Activated CD4-positive, alpha-beta memory T cell treated with anti-CD3 and anti-CD28 coated beads, Interleukin-2, amount 10 ng/mL, durations not matched to agents 7 days and 5 days (primary cell): ENCODE measurements at regions of chr17 and their contacts with region 1.

Region 1: DNA sequence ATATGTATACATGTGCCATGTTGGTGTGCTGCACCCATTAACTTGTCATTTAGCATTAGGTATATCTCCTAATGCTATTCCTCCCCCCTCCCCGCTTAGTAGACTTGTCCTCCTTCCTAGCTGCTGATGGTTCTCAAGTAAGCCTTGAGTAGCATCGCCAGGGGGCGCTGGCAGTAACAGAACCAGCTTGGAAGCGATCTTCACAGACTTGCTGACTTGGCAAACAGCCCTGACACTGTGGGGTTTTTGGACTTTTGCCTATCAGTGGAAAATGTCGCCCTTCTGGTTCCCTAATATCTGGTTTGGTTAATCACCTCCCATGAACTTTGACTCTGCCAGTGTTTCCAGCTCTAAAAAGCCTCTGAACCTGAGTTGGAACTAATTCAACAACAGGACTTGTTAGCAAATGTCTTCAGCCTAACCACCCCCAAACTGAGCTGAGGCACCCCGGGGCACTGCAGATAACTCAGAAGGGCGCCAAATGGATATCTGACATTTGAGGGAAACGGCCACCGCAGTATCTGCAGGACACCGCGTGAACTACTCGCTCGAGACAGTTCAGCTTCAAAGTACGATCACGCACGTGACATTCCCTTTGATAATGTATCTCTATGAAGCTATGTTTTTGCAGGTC is 15.4 kb upstream of the SPATA32 start:
- DNase-seq: peak; percentile 92
- H3K4me3 Mint-ChIP-seq: no peak overlapping the region
- H3K27ac Mint-ChIP-seq: no peak overlapping the region
- H3K4me1 Mint-ChIP-seq: peaks cover 17% of the 10 kb centered on the region
- H3K27me3 Mint-ChIP-seq: no peaks in the 10 kb centered on the region

Region 2: GRCh38 chr17:45261577-45262515 is 15.5 kb before region 1 on chr17 and contains the start of gene SPATA32:
- CTCF ChIA-PET with region 1: interaction called, 11 read pairs
- POLR2A ChIA-PET with region 1: interaction called, 3 read pairs
- DNase-seq: peak; percentile 75
- H3K4me3 Mint-ChIP-seq: peak within 1 kb of the TSS; percentile 70
- H3K27ac Mint-ChIP-seq: peak within 1 kb of the TSS; percentile 61
- H3K4me1 Mint-ChIP-seq: peaks cover 22% of the 10 kb centered on the region
- H3K27me3 Mint-ChIP-seq: no peaks in the 10 kb centered on the region
- total RNA-seq, gene SPATA32: 0.20 to 0.23 TPM

Region 3: DNA sequence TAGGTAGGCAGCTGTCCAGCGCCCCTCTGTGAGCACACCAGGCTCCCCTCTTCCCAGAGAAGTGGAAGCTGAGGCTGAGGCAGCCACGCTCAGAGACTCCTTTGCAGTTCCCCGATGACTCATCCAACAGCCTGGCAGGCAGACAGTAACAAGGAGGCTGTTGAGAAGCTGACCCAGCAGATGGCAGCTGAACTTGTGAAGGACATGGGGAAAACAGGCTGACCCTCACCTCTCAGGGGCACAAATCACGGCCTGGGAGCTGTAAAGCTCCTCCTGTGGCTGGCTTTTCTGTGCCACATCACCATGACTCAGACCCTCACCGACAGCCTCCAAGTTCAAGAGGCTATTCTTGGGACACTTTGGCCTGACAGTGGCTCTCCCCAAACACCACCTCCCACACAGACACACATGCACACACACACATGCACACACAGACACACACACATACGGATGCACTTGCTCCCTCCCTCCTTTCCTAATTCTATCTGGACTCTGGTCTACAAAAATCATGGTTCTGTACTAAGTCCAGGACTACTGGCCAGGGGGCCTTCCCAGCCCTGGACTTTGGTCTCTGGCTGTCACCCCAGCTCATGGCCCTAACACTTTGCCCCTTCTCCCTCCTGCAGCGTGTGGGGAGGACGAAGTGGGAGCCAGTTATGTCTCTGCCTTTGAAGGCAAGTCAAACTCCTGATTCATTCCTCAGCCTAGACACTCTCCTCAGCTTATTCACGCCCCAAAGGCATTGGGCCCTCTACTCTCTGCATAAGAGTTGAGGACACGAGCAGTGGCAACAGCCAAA is 16.3 kb after region 1 on chr17:
- CTCF ChIA-PET with region 1: interaction called, 24 read pairs
- POLR2A ChIA-PET with region 1: interaction called, 6 read pairs
- DNase-seq: no peak
- H3K4me3 Mint-ChIP-seq: no peak overlapping the region
- H3K27ac Mint-ChIP-seq: peak overlapping the region; percentile 63
- H3K4me1 Mint-ChIP-seq: peaks cover 76% of the 10 kb centered on the region
- H3K27me3 Mint-ChIP-seq: no peaks in the 10 kb centered on the region

Region 4: DNA sequence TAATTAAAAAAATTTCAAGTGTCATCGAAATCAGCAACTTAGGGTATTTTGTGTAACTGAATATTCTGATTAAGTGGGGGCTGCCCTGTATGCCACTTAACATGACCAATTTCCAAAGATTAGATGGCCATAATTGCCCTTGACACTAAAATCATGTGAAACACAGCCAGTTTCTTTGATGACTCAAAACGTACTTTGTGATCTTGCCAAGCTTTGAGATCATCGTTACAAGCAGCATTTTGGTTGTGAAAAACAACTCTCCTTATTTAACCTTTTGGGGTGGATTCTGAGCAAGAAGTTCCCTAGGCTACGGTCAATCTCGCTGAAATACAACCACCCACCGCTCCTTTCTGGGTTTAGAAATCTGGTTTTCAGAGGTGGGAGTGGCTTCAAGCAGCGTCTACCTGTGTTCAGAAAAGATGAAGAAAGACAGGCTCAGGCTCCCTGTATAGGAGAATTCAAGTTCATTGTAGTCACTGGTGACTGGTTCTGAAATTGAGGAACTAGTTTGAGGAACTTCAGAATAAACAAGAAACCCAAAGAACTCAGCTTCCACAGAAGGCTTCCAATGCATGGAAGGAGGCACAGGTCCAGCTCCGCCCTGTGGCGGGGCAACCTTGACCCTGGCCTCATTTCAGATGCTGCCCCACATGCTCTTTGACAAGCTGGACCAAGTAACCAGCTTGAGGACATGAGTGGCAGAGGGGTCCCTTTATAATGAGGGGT is 30.1 kb after region 1 on chr17:
- CTCF ChIA-PET with region 1: interaction called, 54 read pairs
- POLR2A ChIA-PET with region 1: interaction called, 16 read pairs
- DNase-seq: peak; percentile 51
- H3K4me3 Mint-ChIP-seq: no peak overlapping the region
- H3K27ac Mint-ChIP-seq: peak overlapping the region; percentile 75
- H3K4me1 Mint-ChIP-seq: peaks cover 86% of the 10 kb centered on the region
- H3K27me3 Mint-ChIP-seq: no peaks in the 10 kb centered on the region

Region 5: GRCh38 chr17:45353043-45353442 is 75.7 kb after region 1 on chr17:
- CTCF ChIA-PET with region 1: no interaction called
- POLR2A ChIA-PET with region 1: no interaction called
- DNase-seq: no peak
- H3K4me3 Mint-ChIP-seq: no peak overlapping the region
- H3K27ac Mint-ChIP-seq: no peak overlapping the region
- H3K4me1 Mint-ChIP-seq: peaks cover 11% of the 10 kb centered on the region
- H3K27me3 Mint-ChIP-seq: peaks cover 30% of the 10 kb centered on the region

Region 6: GRCh38 chr17:45385331-45385997 is 108.1 kb after region 1 on chr17:
- CTCF ChIA-PET with region 1: interaction called, 114 read pairs
- POLR2A ChIA-PET with region 1: interaction called, 19 read pairs
- DNase-seq: peak; percentile 90
- H3K4me3 Mint-ChIP-seq: no peak overlapping the region
- H3K27ac Mint-ChIP-seq: no peak overlapping the region
- H3K4me1 Mint-ChIP-seq: peaks cover 20% of the 10 kb centered on the region
- H3K27me3 Mint-ChIP-seq: peaks cover 28% of the 10 kb centered on the region

Region 7: DNA sequence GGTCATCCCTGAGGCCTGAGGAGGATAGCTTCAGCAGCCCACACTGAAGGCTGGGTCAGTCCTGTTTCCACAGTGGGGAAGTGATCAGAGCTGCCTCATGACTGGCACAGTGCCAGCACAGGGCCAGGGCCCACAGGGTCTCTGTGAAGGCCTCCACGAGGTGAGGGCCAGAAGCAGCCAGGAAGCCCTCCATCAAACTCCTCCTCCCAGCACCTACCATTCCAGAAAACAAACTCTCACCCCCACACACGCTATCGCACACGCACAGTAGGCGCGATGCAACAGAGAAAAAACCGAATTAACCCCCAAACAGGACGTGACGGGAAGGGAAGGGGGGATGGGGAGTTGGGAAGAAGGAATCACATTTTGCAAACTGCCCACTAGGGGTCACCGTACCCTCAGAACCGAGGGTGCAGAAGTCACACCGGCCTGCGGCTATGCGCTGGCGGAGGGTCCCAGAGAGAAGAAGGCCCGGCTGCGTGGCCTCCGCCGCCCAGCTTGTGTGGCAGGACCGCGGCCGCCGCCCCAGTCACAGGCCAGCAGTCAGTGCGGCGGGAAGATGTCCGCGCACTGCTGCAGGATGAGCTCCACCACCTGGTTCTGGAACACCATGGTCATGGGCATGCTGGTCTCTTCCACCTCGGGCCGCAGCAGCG is 117.7 kb after region 1 on chr17:
- CTCF ChIA-PET with region 1: interaction called, 16 read pairs
- POLR2A ChIA-PET with region 1: interaction called, 3 read pairs
- DNase-seq: peak; percentile 35
- H3K4me3 Mint-ChIP-seq: no peak overlapping the region
- H3K27ac Mint-ChIP-seq: no peak overlapping the region
- H3K4me1 Mint-ChIP-seq: no peaks in the 10 kb centered on the region
- H3K27me3 Mint-ChIP-seq: no peaks in the 10 kb centered on the region